ENCODE measurements at regions of chr3 and their contacts with region 1.

Region 1: DNA sequence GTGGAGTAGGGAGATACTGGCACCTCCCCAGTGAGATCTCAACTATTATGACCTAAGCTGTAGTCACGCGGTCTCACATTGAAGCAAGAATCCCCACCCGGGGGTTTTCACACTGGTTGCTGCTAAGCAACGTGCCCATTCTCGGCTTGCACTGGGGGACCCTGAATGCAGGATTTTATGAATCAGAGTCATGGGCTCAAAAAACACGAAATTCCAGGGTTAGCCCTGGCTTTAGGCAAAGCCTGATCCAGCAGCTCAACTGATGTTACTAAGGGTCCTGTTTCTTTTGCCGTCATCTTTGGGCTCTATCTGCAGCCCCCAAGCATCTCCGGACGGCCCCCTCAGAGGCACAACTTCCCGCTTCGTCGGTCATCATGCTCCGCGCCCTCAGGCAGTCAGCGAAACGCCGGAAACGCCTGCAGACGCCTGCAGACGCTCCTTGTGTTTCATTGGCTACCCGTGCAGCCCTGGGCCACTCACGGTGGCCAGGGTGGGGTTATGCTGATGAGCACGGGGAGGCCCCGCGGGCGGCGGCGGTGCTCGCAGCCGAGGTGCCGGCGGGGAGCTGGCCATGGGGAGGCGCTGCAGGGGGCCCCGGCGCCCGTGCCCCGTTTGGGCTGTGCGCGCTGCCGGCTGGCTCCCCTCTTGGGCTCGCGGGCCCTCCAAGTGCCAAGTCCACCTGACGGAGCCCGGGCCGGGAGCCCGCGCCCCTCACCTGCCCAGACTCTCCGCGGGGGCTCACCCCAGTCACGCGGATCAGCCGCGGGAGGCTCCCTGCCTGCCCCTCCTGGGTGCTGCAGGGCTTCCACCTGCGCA is 25.8 kb downstream of the EFCC1 start:
- DNase-seq: peak; percentile 85 to 97 (median 90)
- ATAC-seq: peak; percentile 99
- H3K4me3 ChIP-seq: peak overlapping the region; percentile 54
- H3K4me3 Mint-ChIP-seq: peak overlapping the region; percentile 78
- H3K27ac ChIP-seq: peak overlapping the region; percentile 71 to 83
- H3K27ac Mint-ChIP-seq: peak overlapping the region; percentile 95
- H3K4me1 ChIP-seq: peaks cover 22% of the 10 kb centered on the region
- H3K4me1 Mint-ChIP-seq: peaks cover 18% of the 10 kb centered on the region
- H3K27me3 ChIP-seq: no peaks in the 10 kb centered on the region
- H3K27me3 Mint-ChIP-seq: no peaks in the 10 kb centered on the region
- CTCF ChIP-seq: peak; percentile 82

Region 2: GRCh38 chr3:128993461-128994173 is 33.3 kb before region 1 on chr3 and contains the start of gene CFAP92:
- CTCF ChIA-PET with region 1: interaction called, 9 read pairs
- POLR2A ChIA-PET with region 1: interaction called, 8 read pairs
- intact Hi-C with region 1: loop called in 1 of 2 experiments (anchors 2 kb)
- DNase-seq: peak; percentile 85 to 96 (median 90)
- ATAC-seq: peak; percentile 97
- H3K4me3 ChIP-seq: peak within 1 kb of the TSS; percentile 48
- H3K4me3 Mint-ChIP-seq: peak within 1 kb of the TSS; percentile 80
- H3K27ac ChIP-seq: peak within 1 kb of the TSS; percentile 30 to 38
- H3K27ac Mint-ChIP-seq: peak within 1 kb of the TSS; percentile 78
- H3K4me1 ChIP-seq: peaks cover 30% of the 10 kb centered on the region
- H3K4me1 Mint-ChIP-seq: peaks cover 47% of the 10 kb centered on the region
- H3K27me3 ChIP-seq: no peaks in the 10 kb centered on the region
- H3K27me3 Mint-ChIP-seq: no peaks in the 10 kb centered on the region
- CTCF ChIP-seq: no peak
- total RNA-seq, gene CFAP92: 0.19 to 0.45 TPM

Region 3: GRCh38 chr3:129003578-129004160 is 23.3 kb before region 1 on chr3:
- CTCF ChIA-PET with region 1: interaction called, 10 read pairs
- POLR2A ChIA-PET with region 1: interaction called, 11 read pairs
- intact Hi-C with region 1: loop called in 1 of 2 experiments (anchors 2 kb)
- DNase-seq: peak; percentile 17 to 85 (median 55)
- ATAC-seq: peak; percentile 90
- H3K4me3 ChIP-seq: peak overlapping the region; percentile 14
- H3K4me3 Mint-ChIP-seq: no peak overlapping the region
- H3K27ac ChIP-seq: no peak overlapping the region
- H3K27ac Mint-ChIP-seq: no peak overlapping the region
- H3K4me1 ChIP-seq: peaks cover 51% of the 10 kb centered on the region
- H3K4me1 Mint-ChIP-seq: peaks cover 48% of the 10 kb centered on the region
- H3K27me3 ChIP-seq: peaks cover 24 to 35% of the 10 kb centered on the region in 2 experiments
- H3K27me3 Mint-ChIP-seq: peaks cover 26% of the 10 kb centered on the region
- CTCF ChIP-seq: no peak

Region 4: GRCh38 chr3:129039271-129040038 is 12.5 kb after region 1 on chr3:
- CTCF ChIA-PET with region 1: interaction called, 7 read pairs
- POLR2A ChIA-PET with region 1: interaction called, 3 read pairs
- intact Hi-C with region 1: loop called in 1 of 2 experiments (anchors 2 kb)
- DNase-seq: peak in 3 of 14 experiments; percentile 41 to 42 (median 42)
- ATAC-seq: no peak
- H3K4me3 ChIP-seq: no peak overlapping the region
- H3K4me3 Mint-ChIP-seq: no peak overlapping the region
- H3K27ac ChIP-seq: no peak overlapping the region
- H3K27ac Mint-ChIP-seq: no peak overlapping the region
- H3K4me1 ChIP-seq: peaks cover 26% of the 10 kb centered on the region
- H3K4me1 Mint-ChIP-seq: peaks cover 16% of the 10 kb centered on the region
- H3K27me3 ChIP-seq: peaks cover 0 to 8% of the 10 kb centered on the region in 2 experiments
- H3K27me3 Mint-ChIP-seq: peaks cover 21% of the 10 kb centered on the region
- CTCF ChIP-seq: no peak

Region 5: DNA sequence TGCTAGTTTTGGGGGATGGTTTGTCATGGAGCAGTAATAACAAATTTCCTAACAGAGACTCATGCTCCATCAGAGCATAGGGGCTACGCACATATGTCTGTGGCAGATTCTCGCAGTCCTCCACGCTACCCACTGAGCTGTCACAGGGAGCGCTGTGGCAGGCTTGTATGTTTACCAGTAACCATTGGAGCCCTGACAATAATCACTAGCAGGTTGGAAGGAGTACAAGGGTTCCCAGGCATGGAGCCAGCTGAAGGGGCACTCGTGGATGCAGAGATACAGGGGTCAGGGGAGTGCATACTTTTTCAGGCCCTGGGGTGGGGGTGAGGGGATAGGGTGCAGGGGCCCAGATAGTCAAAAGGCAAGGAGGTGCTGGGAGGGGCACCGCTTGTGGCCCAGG is 25.7 kb after region 1 on chr3:
- CTCF ChIA-PET with region 1: interaction called, 24 read pairs
- POLR2A ChIA-PET with region 1: interaction called, 9 read pairs
- intact Hi-C with region 1: no loop called
- DNase-seq: no peak
- ATAC-seq: no peak
- H3K4me3 ChIP-seq: no peak overlapping the region
- H3K4me3 Mint-ChIP-seq: no peak overlapping the region
- H3K27ac ChIP-seq: no peak overlapping the region
- H3K27ac Mint-ChIP-seq: no peak overlapping the region
- H3K4me1 ChIP-seq: peaks cover 5% of the 10 kb centered on the region
- H3K4me1 Mint-ChIP-seq: peaks cover 9% of the 10 kb centered on the region
- H3K27me3 ChIP-seq: no peaks in the 10 kb centered on the region
- H3K27me3 Mint-ChIP-seq: no peaks in the 10 kb centered on the region
- CTCF ChIP-seq: no peak

Region 6: DNA sequence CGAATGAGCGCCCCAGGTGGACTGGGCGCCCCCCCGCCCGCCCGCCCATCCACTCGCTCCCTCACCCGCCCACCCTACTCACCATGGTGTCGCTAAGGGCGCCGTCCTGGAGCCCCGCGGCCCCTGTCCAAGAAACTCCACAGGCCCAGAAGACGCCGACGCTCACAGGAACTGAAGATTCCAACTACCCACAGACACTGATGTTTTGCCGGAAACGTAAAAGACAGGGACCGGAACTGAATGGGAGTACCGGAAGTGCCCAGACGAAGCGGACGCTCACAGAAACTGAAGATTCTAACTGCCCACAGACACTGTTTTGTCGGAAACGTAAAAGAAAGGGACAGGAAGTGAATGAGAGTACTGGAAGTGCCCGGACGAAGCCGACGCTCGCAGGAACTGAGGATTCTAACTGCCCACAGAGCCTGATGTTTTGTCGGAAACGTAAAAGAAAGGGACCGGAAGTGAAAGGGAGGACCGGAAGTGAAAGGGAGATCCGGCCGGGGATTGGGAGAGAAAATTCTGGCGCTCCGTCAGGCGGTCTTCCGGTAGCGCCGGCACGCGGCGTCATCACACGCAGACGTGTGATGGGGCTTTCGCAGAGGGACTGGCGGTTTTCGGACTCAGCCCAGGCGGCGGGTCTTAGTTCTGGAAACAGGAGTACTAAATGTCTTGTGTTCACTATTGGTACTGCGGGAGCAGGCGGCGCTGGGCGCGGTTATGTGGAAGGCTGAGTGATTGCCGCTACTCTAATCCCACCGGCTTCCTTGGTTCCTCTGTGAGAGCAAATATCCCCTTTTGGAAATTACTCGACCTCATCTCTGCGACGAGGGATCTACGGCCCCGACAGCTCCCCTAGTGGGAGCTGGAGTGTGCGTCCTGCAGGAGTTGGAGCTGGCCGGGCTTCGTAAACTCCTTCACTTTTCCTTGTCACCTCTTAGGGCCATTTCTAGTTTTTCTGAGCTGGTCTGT is 134.2 kb after region 1 on chr3 and contains the start of gene ISY1:
- CTCF ChIA-PET with region 1: interaction called, 7 read pairs
- POLR2A ChIA-PET with region 1: interaction called, 15 read pairs
- intact Hi-C with region 1: no loop called
- DNase-seq: peak; percentile 70 to 97 (median 84)
- ATAC-seq: peak; percentile 74
- H3K4me3 ChIP-seq: peak within 1 kb of the TSS; percentile 82
- H3K4me3 Mint-ChIP-seq: peak within 1 kb of the TSS; percentile 96
- H3K27ac ChIP-seq: peak within 1 kb of the TSS; percentile 92 to 99
- H3K27ac Mint-ChIP-seq: peak within 1 kb of the TSS; percentile 95
- H3K4me1 ChIP-seq: peaks cover 24% of the 10 kb centered on the region
- H3K4me1 Mint-ChIP-seq: peaks cover 55% of the 10 kb centered on the region
- H3K27me3 ChIP-seq: no peaks in the 10 kb centered on the region
- H3K27me3 Mint-ChIP-seq: no peaks in the 10 kb centered on the region
- CTCF ChIP-seq: peak; percentile 76
- total RNA-seq, gene ISY1: 28.2 to 28.5 TPM